Cardiac septum (tissue), 1 donor: ENCODE measurements at regions of chr12 and their contacts with region 1.

Region 1: GRCh38 chr12:109804820-109805761 is 28.1 kb downstream of the TRPV4 start:
- DNase-seq: peak; percentile 88

Region 2: GRCh38 chr12:109358154-109358869 is 446.8 kb before region 1 on chr12:
- intact Hi-C with region 1: no loop called
- DNase-seq: no peak

Region 3: DNA sequence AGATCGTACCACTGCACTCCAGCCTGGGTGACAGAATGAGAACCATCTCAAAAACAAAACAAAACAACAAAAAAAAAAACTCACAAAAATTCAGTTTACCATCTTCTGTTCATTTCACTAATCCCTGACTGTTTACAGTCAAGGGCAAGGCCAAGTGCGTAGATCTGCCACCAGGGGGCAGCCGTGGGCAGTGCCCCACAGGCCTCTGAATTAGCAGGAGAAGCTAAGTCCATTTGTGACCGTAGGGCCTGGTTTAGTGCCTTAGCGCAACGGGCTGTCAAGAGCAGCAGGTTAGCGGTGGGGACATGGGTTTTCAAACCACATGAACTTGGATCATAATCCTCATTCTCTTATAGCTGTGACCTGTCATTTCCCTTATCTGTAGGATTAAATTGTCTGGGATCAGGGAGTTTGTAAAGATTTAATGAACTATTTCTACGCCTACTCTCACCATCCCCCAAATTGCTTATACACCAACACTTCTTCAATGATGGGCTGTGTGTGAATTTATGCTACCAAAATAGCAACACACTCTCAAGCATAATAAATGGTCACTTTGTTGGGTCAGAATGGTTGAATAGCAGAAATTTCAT is 377.0 kb before region 1 on chr12:
- intact Hi-C with region 1: no loop called
- DNase-seq: peak; percentile 88

Region 4: GRCh38 chr12:109844983-109845823 is 40.1 kb after region 1 on chr12:
- intact Hi-C with region 1: loop called (anchors 2 kb)
- DNase-seq: peak; percentile 95

Region 5: DNA sequence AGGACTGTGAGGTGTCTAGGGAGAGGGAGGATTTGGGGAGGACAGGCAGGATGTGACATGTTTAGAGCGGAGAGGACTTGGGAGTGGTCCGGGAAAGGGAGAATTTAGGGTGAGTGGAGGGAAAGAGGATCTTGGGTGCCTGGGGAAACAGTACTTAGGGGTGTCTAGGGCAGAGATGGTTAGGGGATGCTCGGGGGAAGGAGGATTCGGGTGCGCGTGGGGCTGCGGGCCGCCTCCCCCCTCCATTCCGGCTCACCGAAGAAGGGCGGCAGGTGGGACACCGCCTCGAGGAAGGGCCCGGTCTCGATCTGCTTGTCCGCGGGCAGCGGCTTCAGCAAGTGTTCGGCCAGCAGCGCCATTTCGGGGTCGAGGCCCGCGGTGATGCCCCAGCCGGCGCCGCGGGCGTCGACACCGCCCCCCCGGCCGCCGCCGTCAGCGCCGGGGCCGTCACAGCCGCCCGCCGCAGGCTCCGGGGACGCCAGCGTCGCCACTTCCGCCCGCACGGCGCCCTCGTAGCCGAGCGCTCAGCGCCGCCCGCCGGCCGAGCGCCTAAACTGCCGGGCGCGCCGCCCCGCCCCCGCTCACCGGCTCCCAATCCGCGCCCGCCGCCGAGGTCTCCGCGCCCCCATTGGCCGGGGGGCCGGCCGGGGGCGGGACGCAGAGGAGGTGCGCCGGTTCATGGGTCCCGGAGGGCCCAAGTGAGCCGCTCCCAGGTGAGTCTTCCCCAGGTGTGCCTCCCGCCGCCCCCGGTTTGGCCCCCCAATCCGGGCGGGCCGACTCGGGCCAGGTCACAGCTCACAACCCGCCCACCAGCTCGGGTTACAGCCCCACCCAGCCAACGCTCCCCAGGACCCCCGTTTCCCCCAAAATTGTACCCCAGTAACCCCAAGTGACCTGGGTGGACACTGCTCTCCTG is 75.2 kb after region 1 on chr12 and contains the start of gene GLTP:
- intact Hi-C with region 1: loop called (anchors 2 kb)
- DNase-seq: peak; percentile 95
- total RNA-seq, gene GLTP: 23.3 TPM

Region 6: GRCh38 chr12:110270125-110270962 is 465.3 kb after region 1 on chr12:
- intact Hi-C with region 1: no loop called
- DNase-seq: no peak